ENCODE measurements at regions of chr12 and their contacts with region 1.

Region 1: DNA sequence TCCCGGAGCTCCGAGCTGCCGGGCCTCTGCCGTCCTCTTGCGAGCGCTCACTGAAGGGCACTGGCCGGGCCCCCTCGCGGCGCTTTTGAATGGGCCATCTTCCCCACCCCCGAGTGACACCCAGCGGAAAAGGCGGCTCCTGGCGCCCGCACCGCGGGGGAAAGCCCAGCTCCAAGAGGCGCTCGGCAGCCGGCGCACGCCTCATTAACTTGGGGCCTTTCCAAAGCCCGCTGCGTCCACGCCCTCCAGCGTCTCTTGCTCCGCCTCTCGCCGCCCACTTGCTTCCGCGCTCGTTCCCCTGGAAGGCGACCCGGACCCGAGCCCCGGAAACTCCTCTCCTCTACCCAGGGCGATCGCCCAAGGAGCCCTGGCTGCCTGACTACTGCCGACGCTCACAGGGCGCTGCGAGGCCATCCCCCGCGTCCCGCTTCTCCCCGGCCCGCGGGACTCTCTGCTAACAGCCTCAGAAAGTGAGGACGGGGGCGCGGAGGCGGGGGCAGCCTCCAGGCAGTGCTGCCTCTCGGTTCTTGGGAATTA is at the start of gene PHLDA1:
- DNase-seq: peak; percentile 78 to 96 (median 88)
- ATAC-seq: peak; percentile 85
- H3K4me3 ChIP-seq: peak within 1 kb of the TSS; percentile 73 to 81
- H3K4me3 Mint-ChIP-seq: peak within 1 kb of the TSS; percentile 94
- H3K27ac ChIP-seq: peak within 1 kb of the TSS; percentile 63 to 76
- H3K27ac Mint-ChIP-seq: peak within 1 kb of the TSS; percentile 80
- H3K4me1 ChIP-seq: peaks cover 20% of the 10 kb centered on the region
- H3K4me1 Mint-ChIP-seq: peaks cover 28% of the 10 kb centered on the region
- H3K27me3 ChIP-seq: no peaks in the 10 kb centered on the region
- H3K27me3 Mint-ChIP-seq: peaks cover 2% of the 10 kb centered on the region
- CTCF ChIP-seq: peak; percentile 40
- total RNA-seq, gene PHLDA1: 5.6 to 5.8 TPM

Region 2: DNA sequence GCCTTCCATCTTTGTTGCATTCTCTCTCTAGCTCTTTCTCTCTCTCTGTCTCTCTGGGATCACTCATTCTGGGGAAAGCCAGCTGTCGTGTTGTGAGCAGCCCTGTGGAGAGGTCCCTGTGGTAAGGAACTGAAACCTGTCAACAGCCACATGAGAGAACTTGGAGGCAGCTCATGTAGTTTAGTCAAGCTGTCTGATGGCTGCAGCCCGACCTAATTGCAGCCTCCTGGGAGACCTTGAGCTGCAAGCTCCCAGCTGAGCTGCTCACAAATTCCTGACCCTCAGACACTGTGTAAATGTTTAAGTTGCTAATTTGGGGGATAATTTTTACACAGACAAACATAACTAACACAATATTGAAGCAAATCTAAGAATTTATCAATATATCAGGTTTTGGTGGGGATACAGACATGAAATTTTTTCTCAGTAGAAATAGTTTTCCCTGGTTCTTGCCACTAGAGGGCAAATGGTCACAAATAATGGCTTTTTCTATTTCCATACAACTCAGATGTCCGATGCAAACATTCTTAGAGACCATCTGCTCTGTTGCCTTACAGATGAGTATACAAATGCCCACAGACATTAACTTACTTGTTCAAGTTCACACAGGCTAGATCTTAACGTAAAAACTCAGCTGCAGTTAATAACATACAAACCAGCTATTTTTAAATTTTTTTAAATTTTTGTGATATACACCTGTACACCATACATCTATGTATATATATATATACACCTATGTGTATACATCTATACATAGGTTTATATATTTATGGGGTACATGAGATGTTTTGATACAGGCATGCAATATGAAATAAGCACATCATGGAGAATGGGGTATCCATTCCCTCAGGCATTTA is 504.7 kb before region 1 on chr12:
- CTCF ChIA-PET with region 1: interaction called, 23 read pairs
- POLR2A ChIA-PET with region 1: no interaction called
- intact Hi-C with region 1: loop called in 1 of 2 experiments (anchors 2 kb)
- DNase-seq: peak in 2 of 9 experiments; percentile 45 to 60
- ATAC-seq: no peak
- H3K4me3 ChIP-seq: no peak overlapping the region
- H3K4me3 Mint-ChIP-seq: no peak overlapping the region
- H3K27ac ChIP-seq: no peak overlapping the region
- H3K27ac Mint-ChIP-seq: no peak overlapping the region
- H3K4me1 ChIP-seq: no peaks in the 10 kb centered on the region
- H3K4me1 Mint-ChIP-seq: peaks cover 1% of the 10 kb centered on the region
- H3K27me3 ChIP-seq: peaks cover 0 to 4% of the 10 kb centered on the region in 2 experiments
- H3K27me3 Mint-ChIP-seq: peaks cover 17% of the 10 kb centered on the region
- CTCF ChIP-seq: peak; percentile 60

Region 3: DNA sequence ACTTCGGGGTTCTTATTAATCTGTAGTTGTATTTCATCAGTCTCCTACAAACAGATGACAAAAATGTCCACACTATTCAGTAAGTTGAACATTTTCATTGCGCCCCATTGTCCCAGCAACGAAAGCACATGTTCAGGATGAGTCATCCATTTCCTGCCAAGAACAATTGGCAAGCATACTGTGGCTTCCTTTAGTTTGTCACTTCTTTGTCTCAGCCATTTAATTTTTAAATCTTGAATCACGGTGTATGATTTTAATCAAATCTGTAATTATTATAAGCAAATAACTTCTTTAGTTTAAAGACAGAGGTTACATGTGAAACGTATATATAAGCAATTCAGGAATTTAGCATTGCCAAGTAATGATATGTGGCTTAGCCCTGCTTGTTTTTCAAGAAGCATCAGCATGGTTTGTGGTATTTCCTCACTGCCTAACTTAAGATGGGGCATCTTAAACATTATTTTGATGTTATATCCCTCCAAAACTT is 308.8 kb before region 1 on chr12:
- CTCF ChIA-PET with region 1: no interaction called
- POLR2A ChIA-PET with region 1: no interaction called
- intact Hi-C with region 1: loop called (anchors 5 to 10 kb)
- DNase-seq: peak in 8 of 9 experiments; percentile 8 to 63 (median 36)
- ATAC-seq: peak; percentile 81
- H3K4me3 ChIP-seq: no peak overlapping the region
- H3K4me3 Mint-ChIP-seq: no peak overlapping the region
- H3K27ac ChIP-seq: no peak overlapping the region
- H3K27ac Mint-ChIP-seq: no peak overlapping the region
- H3K4me1 ChIP-seq: peaks cover 18% of the 10 kb centered on the region
- H3K4me1 Mint-ChIP-seq: peaks cover 12% of the 10 kb centered on the region
- H3K27me3 ChIP-seq: no peaks in the 10 kb centered on the region
- H3K27me3 Mint-ChIP-seq: peaks cover 7% of the 10 kb centered on the region
- CTCF ChIP-seq: no peak

Region 4: GRCh38 chr12:75977952-75978671 is 53.5 kb before region 1 on chr12:
- CTCF ChIA-PET with region 1: interaction called, 3 read pairs
- POLR2A ChIA-PET with region 1: interaction called, 5 read pairs
- intact Hi-C with region 1: loop called in 1 of 2 experiments (anchors 1 kb)
- DNase-seq: peak; percentile 27 to 92 (median 75)
- ATAC-seq: peak; percentile 90
- H3K4me3 ChIP-seq: no peak overlapping the region
- H3K4me3 Mint-ChIP-seq: no peak overlapping the region
- H3K27ac ChIP-seq: peak overlapping the region in 1 of 2 experiments; percentile 63
- H3K27ac Mint-ChIP-seq: peak overlapping the region; percentile 71
- H3K4me1 ChIP-seq: peaks cover 23% of the 10 kb centered on the region
- H3K4me1 Mint-ChIP-seq: peaks cover 31% of the 10 kb centered on the region
- H3K27me3 ChIP-seq: no peaks in the 10 kb centered on the region
- H3K27me3 Mint-ChIP-seq: no peaks in the 10 kb centered on the region
- CTCF ChIP-seq: no peak

Region 5: DNA sequence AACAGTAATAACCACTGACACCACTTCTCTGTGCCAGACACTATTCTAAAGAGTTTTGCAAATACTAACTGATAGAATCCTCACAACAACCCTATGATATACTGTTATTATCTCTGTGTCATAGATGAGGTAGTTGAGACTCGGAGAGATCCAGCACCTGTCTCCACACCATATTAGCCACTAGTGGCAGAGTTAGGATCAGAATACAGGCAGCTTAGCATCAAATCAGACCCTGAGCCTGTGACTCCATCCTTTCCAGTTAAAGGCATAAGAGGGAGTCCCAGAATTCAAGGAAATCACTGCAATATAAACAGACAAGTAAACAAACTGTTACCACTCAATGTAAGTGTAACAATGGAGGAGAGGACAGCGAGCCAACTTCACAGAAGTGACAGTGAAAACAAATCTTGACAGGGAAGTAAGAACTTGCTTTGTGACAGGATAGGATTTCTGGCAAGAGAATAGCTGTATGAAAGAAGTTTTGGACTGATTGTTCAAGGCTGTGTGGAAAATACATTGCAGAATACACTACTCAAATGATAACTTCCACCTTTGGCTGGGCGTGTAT is 64.6 kb after region 1 on chr12:
- CTCF ChIA-PET with region 1: no interaction called
- POLR2A ChIA-PET with region 1: no interaction called
- intact Hi-C with region 1: no loop called
- DNase-seq: no peak
- ATAC-seq: no peak
- H3K4me3 ChIP-seq: no peak overlapping the region
- H3K4me3 Mint-ChIP-seq: no peak overlapping the region
- H3K27ac ChIP-seq: no peak overlapping the region
- H3K27ac Mint-ChIP-seq: no peak overlapping the region
- H3K4me1 ChIP-seq: no peaks in the 10 kb centered on the region
- H3K4me1 Mint-ChIP-seq: no peaks in the 10 kb centered on the region
- H3K27me3 ChIP-seq: no peaks in the 10 kb centered on the region
- H3K27me3 Mint-ChIP-seq: peaks cover 11% of the 10 kb centered on the region
- CTCF ChIP-seq: no peak